ENCODE measurements at regions of chr1 and their contacts with region 1.

Region 1: GRCh38 chr1:37553927-37554808 is at the start of gene SNIP1:
- DNase-seq: peak; percentile 93 to 100 (median 98)

Region 2: GRCh38 chr1:37372302-37372701 is 181.9 kb before region 1 on chr1:
- intact Hi-C with region 1: no loop called
- DNase-seq: no peak

Region 3: DNA sequence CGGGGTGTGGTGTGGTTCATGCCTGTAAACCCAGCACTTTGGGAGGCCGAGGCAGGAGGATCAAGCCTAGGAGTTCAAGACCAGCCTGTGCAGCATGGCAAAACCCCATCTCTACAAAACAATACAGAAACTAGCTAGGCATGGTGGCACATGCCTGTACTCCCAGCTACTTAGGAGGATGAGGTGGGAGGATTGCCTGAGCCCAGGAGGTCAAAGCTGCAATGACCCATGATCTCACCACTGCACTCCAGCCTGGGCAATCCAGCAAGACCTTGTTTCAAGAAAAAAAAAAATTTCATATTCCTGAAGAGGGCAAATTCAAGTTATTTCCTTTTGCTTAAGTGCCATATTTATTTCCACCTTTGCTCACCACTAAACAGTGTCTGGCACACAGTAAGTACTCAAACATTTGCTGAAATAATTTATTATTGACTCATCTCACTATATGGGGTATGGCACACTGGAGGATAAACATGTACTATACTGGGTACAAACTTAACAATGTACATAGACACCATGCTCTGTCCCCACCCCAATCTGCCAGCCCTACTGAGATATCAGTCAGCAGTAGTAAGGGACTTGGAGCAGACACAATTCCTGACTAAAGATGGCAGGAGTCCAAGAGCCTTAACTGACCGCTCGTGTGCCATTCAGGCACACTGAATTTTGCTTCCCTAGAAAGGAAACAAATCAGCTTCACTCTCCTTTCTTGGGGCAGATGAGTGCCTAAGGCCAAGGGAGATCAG is 55.1 kb before region 1 on chr1:
- intact Hi-C with region 1: no loop called
- DNase-seq: peak in 1 of 10 donors; percentile 54

Region 4: DNA sequence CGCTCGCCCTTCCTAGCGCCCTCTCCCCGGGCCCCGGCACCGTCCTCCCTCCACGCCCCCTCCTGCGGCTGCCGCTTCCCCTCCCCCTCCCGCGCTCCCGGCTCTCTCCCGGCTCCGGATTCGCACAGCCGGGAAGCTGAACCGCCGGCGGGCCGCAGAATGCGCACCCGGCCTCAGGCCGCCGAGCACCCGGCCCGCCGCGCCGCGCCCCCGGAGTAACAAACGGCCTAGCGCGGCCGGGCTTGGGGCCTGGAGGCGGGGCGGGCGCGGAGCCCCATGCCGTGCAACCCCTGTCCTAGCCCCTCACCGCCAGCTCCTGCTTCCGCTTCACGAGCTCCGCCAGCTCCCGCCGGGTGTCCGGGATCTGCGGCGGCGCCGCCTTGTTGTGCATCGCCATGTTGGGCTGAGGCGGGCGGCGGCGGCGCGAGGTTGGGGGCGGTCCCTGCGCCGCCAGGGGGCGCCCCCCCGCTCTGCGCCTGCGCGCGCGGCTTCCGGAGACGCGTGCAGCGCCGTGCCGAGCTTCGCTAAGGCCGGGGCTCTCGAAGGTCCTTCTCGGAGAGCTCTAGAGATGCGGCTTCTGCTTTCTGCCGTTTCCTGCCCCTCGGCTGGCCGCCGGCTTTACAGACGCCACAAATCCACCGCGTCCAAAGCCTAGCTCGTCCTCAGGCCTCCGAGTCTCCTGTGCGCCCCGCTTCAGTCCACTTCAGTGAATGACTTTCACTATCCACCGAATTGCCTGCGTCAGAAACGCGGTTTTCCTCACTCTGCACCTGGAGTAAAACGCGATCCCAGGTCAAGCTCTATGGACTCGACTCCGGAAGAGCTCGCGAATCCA is 39.6 kb before region 1 on chr1 and contains the start of gene MEAF6:
- intact Hi-C with region 1: loop called (anchors 2 kb)
- DNase-seq: peak; percentile 66 to 97 (median 75)

Region 5: GRCh38 chr1:37595440-37596319 is 41.5 kb after region 1 on chr1 and contains the start of gene GNL2:
- intact Hi-C with region 1: loop called (anchors 1 kb)
- DNase-seq: peak; percentile 89 to 99 (median 96)